Naive thymus-derived CD4-positive, alpha-beta T cell (primary cell): ENCODE measurements at regions of chr5 and their contacts with region 1.

Region 1: GRCh38 chr5:80093796-80094195 is 58.6 kb downstream of the THBS4 start:
- DNase-seq: no peak
- ATAC-seq: no peak
- H3K4me3 ChIP-seq: no peak overlapping the region
- H3K4me3 Mint-ChIP-seq: peak overlapping the region in 2 of 10 donors; percentile 3 to 5
- H3K27ac ChIP-seq: no peak overlapping the region
- H3K27ac Mint-ChIP-seq: peak overlapping the region in 3 of 9 donors; percentile 9 to 62 (median 54)
- H3K4me1 ChIP-seq: peaks cover 0 to 18% of the 10 kb centered on the region in 2 donors
- H3K4me1 Mint-ChIP-seq: peaks cover 15 to 53% (median 47%) of the 10 kb centered on the region in 7 donors
- H3K27me3 ChIP-seq: no peaks in the 10 kb centered on the region
- H3K27me3 Mint-ChIP-seq: peaks cover 0 to 4% (median 0%) of the 10 kb centered on the region in 5 donors

Region 2: GRCh38 chr5:79878721-79879336 is 215.0 kb before region 1 on chr5:
- CTCF ChIA-PET with region 1: no interaction called
- POLR2A ChIA-PET with region 1: no interaction called
- intact Hi-C with region 1: no loop called
- DNase-seq: peak in 2 of 9 donors; percentile 8 to 40
- ATAC-seq: peak; percentile 29
- H3K4me3 ChIP-seq: no peak overlapping the region
- H3K4me3 Mint-ChIP-seq: no peak overlapping the region
- H3K27ac ChIP-seq: no peak overlapping the region
- H3K27ac Mint-ChIP-seq: no peak overlapping the region
- H3K4me1 ChIP-seq: no peaks in the 10 kb centered on the region
- H3K4me1 Mint-ChIP-seq: peaks cover 0 to 2% (median 0%) of the 10 kb centered on the region in 7 donors
- H3K27me3 ChIP-seq: no peaks in the 10 kb centered on the region
- H3K27me3 Mint-ChIP-seq: peaks cover 0 to 5% (median 2%) of the 10 kb centered on the region in 5 donors

Region 3: GRCh38 chr5:80141147-80141671 is 47.4 kb after region 1 on chr5:
- CTCF ChIA-PET with region 1: interaction called, 8 read pairs
- POLR2A ChIA-PET with region 1: interaction called, 4 read pairs
- intact Hi-C with region 1: loop called (anchors 1 to 2 kb)
- DNase-seq: peak in 1 of 9 donors; percentile 18
- ATAC-seq: no peak
- H3K4me3 ChIP-seq: no peak overlapping the region
- H3K4me3 Mint-ChIP-seq: peak overlapping the region in 9 of 10 donors; percentile 27 to 66 (median 47)
- H3K27ac ChIP-seq: peak overlapping the region; percentile 64
- H3K27ac Mint-ChIP-seq: peak overlapping the region; percentile 83 to 95 (median 89)
- H3K4me1 ChIP-seq: peaks cover 37 to 75% of the 10 kb centered on the region in 2 donors
- H3K4me1 Mint-ChIP-seq: peaks cover 58 to 99% (median 75%) of the 10 kb centered on the region in 7 donors
- H3K27me3 ChIP-seq: no peaks in the 10 kb centered on the region
- H3K27me3 Mint-ChIP-seq: no peaks in the 10 kb centered on the region

Region 4: DNA sequence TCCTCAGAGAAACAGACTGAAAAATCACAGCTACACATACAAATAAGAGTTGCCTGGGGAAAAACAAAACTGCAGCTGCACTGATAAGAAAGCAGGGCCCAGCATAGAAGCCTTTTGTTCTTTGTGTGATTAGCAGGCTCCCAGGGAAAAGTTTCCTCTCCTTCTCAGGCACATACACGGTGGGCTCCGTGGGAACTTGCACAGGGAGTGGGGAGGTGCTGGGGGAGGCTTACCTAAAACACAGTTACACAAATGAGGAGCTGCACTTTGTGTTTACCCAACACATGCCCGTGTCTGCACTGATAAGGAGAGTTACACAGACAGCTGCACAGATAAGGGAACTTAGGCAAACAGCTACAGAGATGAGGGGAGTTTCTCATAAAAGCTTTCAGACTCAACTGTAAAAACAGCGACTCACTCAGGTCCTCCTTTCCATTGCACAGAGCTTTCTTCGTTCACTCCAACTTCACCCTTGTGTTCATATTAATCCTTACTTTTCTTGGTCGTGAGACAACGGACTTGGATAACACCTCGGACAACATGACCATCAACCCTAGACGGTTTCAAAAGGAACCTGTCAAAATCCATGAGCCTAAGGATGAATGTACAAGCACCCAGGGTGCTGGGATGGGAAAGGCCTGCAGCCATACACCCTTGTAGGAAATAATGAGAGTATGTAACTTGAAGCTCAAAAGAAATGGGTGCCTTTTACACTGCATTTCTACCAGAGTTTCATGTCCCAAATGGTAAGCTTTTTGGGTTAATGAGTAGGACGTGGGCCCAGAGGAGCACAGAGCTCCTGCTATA is 111.2 kb after region 1 on chr5:
- CTCF ChIA-PET with region 1: interaction called, 26 read pairs
- POLR2A ChIA-PET with region 1: interaction called, 5 read pairs
- intact Hi-C with region 1: loop called in 1 of 2 experiments (anchors 1 kb)
- DNase-seq: peak in 6 of 9 donors; percentile 44 to 59 (median 49)
- ATAC-seq: peak; percentile 88
- H3K4me3 ChIP-seq: no peak overlapping the region
- H3K4me3 Mint-ChIP-seq: peak overlapping the region in 9 of 10 donors; percentile 58 to 82 (median 73)
- H3K27ac ChIP-seq: peak overlapping the region; percentile 54
- H3K27ac Mint-ChIP-seq: peak overlapping the region; percentile 46 to 99 (median 90)
- H3K4me1 ChIP-seq: peaks cover 10 to 74% of the 10 kb centered on the region in 2 donors
- H3K4me1 Mint-ChIP-seq: peaks cover 45 to 99% (median 91%) of the 10 kb centered on the region in 7 donors
- H3K27me3 ChIP-seq: no peaks in the 10 kb centered on the region
- H3K27me3 Mint-ChIP-seq: no peaks in the 10 kb centered on the region

Region 5: DNA sequence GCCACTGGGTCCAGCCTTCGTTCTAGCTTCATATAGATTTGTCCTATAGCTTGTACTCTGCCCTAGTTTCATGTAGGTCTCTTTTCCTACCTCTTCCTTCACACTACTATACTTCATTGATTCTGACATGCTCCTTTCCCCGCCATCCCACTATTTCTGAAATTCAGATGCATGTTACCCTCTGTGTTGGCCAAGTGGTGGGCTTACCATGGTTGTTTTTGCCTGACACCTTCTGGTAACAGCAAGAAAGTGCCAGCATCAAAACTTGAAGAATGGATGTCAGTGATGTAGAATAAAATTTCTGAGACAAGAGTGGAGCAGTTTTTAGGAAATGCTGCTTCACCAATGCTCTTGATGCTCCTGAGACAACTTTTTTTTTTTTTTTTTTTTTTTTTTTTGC is 181.6 kb after region 1 on chr5:
- CTCF ChIA-PET with region 1: interaction called, 87 read pairs
- POLR2A ChIA-PET with region 1: interaction called, 8 read pairs
- intact Hi-C with region 1: loop called (anchors 1 kb)
- DNase-seq: peak in 6 of 9 donors; percentile 28 to 65 (median 48)
- ATAC-seq: peak; percentile 57
- H3K4me3 ChIP-seq: no peak overlapping the region
- H3K4me3 Mint-ChIP-seq: no peak overlapping the region
- H3K27ac ChIP-seq: no peak overlapping the region
- H3K27ac Mint-ChIP-seq: peak overlapping the region in 7 of 9 donors; percentile 0 to 75 (median 49)
- H3K4me1 ChIP-seq: peaks cover 0 to 19% of the 10 kb centered on the region in 2 donors
- H3K4me1 Mint-ChIP-seq: peaks cover 12 to 36% (median 27%) of the 10 kb centered on the region in 7 donors
- H3K27me3 ChIP-seq: no peaks in the 10 kb centered on the region
- H3K27me3 Mint-ChIP-seq: no peaks in the 10 kb centered on the region

Region 6: GRCh38 chr5:80308526-80308925 is 214.7 kb after region 1 on chr5:
- CTCF ChIA-PET with region 1: interaction called, 116 read pairs
- POLR2A ChIA-PET with region 1: interaction called, 9 read pairs
- intact Hi-C with region 1: loop called (anchors 1 kb)
- DNase-seq: no peak
- ATAC-seq: no peak
- H3K4me3 ChIP-seq: no peak overlapping the region
- H3K4me3 Mint-ChIP-seq: no peak overlapping the region
- H3K27ac ChIP-seq: no peak overlapping the region
- H3K27ac Mint-ChIP-seq: no peak overlapping the region
- H3K4me1 ChIP-seq: no peaks in the 10 kb centered on the region
- H3K4me1 Mint-ChIP-seq: peaks cover 0 to 4% (median 0%) of the 10 kb centered on the region in 7 donors
- H3K27me3 ChIP-seq: no peaks in the 10 kb centered on the region
- H3K27me3 Mint-ChIP-seq: peaks cover 0 to 3% (median 0%) of the 10 kb centered on the region in 5 donors

Region 7: DNA sequence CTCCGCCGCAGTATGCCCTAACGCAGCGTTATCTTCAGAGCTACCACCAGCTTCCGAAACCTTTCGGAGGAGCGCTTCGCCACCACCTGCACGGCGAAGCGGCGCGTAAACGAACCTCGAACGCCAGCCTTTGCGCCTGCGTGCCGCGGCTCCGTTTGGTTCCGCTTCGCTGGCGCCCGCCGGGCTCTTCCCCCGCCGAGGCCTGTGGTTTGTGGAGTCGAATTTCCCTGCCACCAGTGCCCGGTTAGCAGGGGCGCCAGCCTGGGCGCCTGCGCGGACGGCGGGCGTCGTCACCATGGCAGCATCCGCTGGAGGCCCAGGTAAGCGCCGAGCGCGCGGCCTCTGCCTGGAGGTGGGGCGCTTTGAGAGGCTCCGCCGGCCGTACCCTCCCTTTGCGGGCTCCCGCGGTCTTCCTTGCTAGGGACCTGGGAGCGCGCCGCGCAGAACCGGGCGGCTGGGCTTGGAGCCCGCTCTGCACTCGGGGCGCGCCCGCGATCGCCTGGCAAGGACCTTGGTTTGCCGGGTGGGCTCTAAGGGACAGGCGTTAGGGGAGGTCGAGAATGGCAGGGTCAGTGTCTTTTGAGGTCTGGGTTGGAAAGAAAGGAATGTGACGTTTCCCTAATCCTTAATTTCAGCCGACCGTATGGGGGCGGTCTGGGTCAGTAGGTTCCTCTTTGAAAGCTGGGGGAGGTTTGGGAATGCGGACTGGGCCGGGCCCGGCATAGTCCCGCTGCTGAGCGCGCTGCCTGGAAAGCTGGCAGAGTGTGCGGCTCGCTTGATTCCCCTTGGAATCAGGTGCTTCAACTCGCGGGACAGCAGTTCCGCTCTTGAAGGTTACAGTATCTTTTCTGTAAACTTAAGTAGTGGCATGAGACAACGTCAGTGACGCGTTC is 394.3 kb after region 1 on chr5 and contains the start of gene FAM151B:
- CTCF ChIA-PET with region 1: no interaction called
- POLR2A ChIA-PET with region 1: no interaction called
- intact Hi-C with region 1: loop called in 1 of 2 experiments (anchors 10 kb)
- DNase-seq: peak; percentile 58 to 86 (median 79)
- ATAC-seq: peak; percentile 90
- H3K4me3 ChIP-seq: peak within 1 kb of the TSS; percentile 71
- H3K4me3 Mint-ChIP-seq: peak within 1 kb of the TSS; percentile 83 to 92 (median 88)
- H3K27ac ChIP-seq: peak within 1 kb of the TSS; percentile 52
- H3K27ac Mint-ChIP-seq: peak within 1 kb of the TSS; percentile 47 to 88 (median 72)
- H3K4me1 ChIP-seq: peaks cover 0 to 7% of the 10 kb centered on the region in 2 donors
- H3K4me1 Mint-ChIP-seq: peaks cover 9 to 27% (median 14%) of the 10 kb centered on the region in 7 donors
- H3K27me3 ChIP-seq: no peaks in the 10 kb centered on the region
- H3K27me3 Mint-ChIP-seq: peaks cover 0 to 36% (median 7%) of the 10 kb centered on the region in 5 donors
- total RNA-seq, gene FAM151B: 0.36 to 3.4 (median 1.1) TPM in 4 of 5 experiments, not detected in the other

Region 8: GRCh38 chr5:80672140-80672736 is 578.4 kb after region 1 on chr5:
- CTCF ChIA-PET with region 1: no interaction called
- POLR2A ChIA-PET with region 1: no interaction called
- intact Hi-C with region 1: loop called (anchors 1 to 2 kb)
- DNase-seq: peak; percentile 26 to 62 (median 48)
- ATAC-seq: peak; percentile 85
- H3K4me3 ChIP-seq: no peak overlapping the region
- H3K4me3 Mint-ChIP-seq: no peak overlapping the region
- H3K27ac ChIP-seq: no peak overlapping the region
- H3K27ac Mint-ChIP-seq: no peak overlapping the region
- H3K4me1 ChIP-seq: no peaks in the 10 kb centered on the region
- H3K4me1 Mint-ChIP-seq: peaks cover 0 to 19% (median 4%) of the 10 kb centered on the region in 7 donors
- H3K27me3 ChIP-seq: no peaks in the 10 kb centered on the region
- H3K27me3 Mint-ChIP-seq: no peaks in the 10 kb centered on the region

Region 9: GRCh38 chr5:80837679-80838078 is 743.9 kb after region 1 on chr5:
- CTCF ChIA-PET with region 1: no interaction called
- POLR2A ChIA-PET with region 1: no interaction called
- intact Hi-C with region 1: no loop called
- DNase-seq: no peak
- ATAC-seq: peak; percentile 51
- H3K4me3 ChIP-seq: no peak overlapping the region
- H3K4me3 Mint-ChIP-seq: no peak overlapping the region
- H3K27ac ChIP-seq: no peak overlapping the region
- H3K27ac Mint-ChIP-seq: peak overlapping the region in 1 of 9 donors; percentile 61
- H3K4me1 ChIP-seq: no peaks in the 10 kb centered on the region
- H3K4me1 Mint-ChIP-seq: peaks cover 0 to 25% (median 2%) of the 10 kb centered on the region in 7 donors
- H3K27me3 ChIP-seq: no peaks in the 10 kb centered on the region
- H3K27me3 Mint-ChIP-seq: no peaks in the 10 kb centered on the region